HCT116 (cell line): ENCODE measurements at regions of chr3 and their contacts with region 1.

Region 1: GRCh38 chr3:39000008-39000450 is 51.7 kb downstream of the SCN11A start:
- DNase-seq: peak; percentile 80
- ATAC-seq: peak; percentile 94
- H3K4me3 ChIP-seq: no peak overlapping the region
- H3K27ac ChIP-seq: no peak overlapping the region
- H3K4me1 ChIP-seq: no peaks in the 10 kb centered on the region
- H3K27me3 ChIP-seq: 0 out of 2 replicates have a peak, but pooled peaks cover 4% of the 10 kb centered on the region
- CTCF ChIP-seq: peak; percentile 83 to 99 (median 95)
- POLR2A ChIP-seq: no peak
- RAD21 ChIP-seq: peak; percentile 88

Region 2: GRCh38 chr3:38651154-38651789 is 348.8 kb before region 1 on chr3:
- CTCF ChIA-PET with region 1: interaction called, 16 read pairs
- POLR2A ChIA-PET with region 1: no interaction called
- RAD21 ChIA-PET with region 1: no interaction called
- intact Hi-C with region 1: loop called (anchors 5 kb)
- DNase-seq: peak; percentile 60
- ATAC-seq: peak; percentile 62
- H3K4me3 ChIP-seq: no peak overlapping the region
- H3K27ac ChIP-seq: no peak overlapping the region
- H3K4me1 ChIP-seq: peaks cover 11 to 31% of the 10 kb centered on the region in 2 experiments
- H3K27me3 ChIP-seq: no peaks in the 10 kb centered on the region
- CTCF ChIP-seq: peak; percentile 80 to 98 (median 85)
- POLR2A ChIP-seq: no peak
- RAD21 ChIP-seq: peak; percentile 80

Region 3: GRCh38 chr3:38843898-38844297 is 156.1 kb before region 1 on chr3:
- CTCF ChIA-PET with region 1: interaction called, 16 read pairs
- POLR2A ChIA-PET with region 1: no interaction called
- RAD21 ChIA-PET with region 1: interaction called in 1 of 2 experiments, 3 read pairs
- intact Hi-C with region 1: no loop called
- DNase-seq: peak; percentile 60
- ATAC-seq: peak; percentile 97
- H3K4me3 ChIP-seq: no peak overlapping the region
- H3K27ac ChIP-seq: no peak overlapping the region
- H3K4me1 ChIP-seq: no peaks in the 10 kb centered on the region
- H3K27me3 ChIP-seq: peaks cover 21% of the 10 kb centered on the region
- CTCF ChIP-seq: peak; percentile 47 to 74 (median 62)
- POLR2A ChIP-seq: no peak
- RAD21 ChIP-seq: peak; percentile 83

Region 4: GRCh38 chr3:38970851-38971638 is 29.0 kb before region 1 on chr3:
- CTCF ChIA-PET with region 1: interaction called, 13 read pairs
- POLR2A ChIA-PET with region 1: no interaction called
- RAD21 ChIA-PET with region 1: no interaction called
- intact Hi-C with region 1: no loop called
- DNase-seq: no peak
- ATAC-seq: no peak
- H3K4me3 ChIP-seq: no peak overlapping the region
- H3K27ac ChIP-seq: no peak overlapping the region
- H3K4me1 ChIP-seq: no peaks in the 10 kb centered on the region
- H3K27me3 ChIP-seq: peaks cover 29% of the 10 kb centered on the region
- CTCF ChIP-seq: no peak
- POLR2A ChIP-seq: no peak
- RAD21 ChIP-seq: no peak

Region 5: DNA sequence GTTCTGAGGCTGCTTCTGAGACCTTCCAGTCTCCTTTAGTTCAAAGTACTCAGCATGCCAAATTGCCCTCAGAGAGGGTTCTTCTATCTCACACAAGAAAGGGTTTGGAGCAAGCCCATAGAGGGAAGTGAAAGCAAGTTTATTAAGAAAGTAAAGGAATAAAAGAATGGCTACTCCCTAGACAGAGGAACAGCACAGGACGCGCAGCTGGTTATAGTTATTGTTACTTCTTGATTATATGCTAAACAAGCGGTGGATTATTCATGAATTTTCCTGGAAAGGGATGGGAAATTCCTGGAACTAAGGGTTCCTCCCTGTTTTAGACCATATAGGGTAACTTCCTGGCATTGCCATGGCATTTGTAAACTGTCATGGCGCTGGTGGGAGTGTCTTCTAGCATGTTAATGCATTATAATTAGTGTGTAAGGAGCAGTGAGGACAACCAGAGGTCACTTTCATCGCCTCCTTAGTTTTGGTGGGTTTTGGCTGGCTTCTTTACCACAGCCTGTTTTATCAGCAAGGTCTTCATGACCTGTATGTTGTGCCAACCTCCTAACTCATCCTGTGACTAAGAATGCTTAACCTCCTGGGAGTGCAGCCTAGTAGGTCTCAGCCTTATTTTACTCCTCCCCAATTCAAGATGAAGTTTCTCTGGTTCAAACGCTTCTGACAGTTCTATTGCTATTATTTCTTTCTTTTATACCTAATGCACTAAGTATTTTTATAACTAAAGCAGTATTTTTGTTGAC is 25.4 kb after region 1 on chr3:
- CTCF ChIA-PET with region 1: interaction called, 17 read pairs
- POLR2A ChIA-PET with region 1: no interaction called
- RAD21 ChIA-PET with region 1: no interaction called
- intact Hi-C with region 1: no loop called
- DNase-seq: no peak
- ATAC-seq: no peak
- H3K4me3 ChIP-seq: no peak overlapping the region
- H3K27ac ChIP-seq: no peak overlapping the region
- H3K4me1 ChIP-seq: no peaks in the 10 kb centered on the region
- H3K27me3 ChIP-seq: peaks cover 6% of the 10 kb centered on the region
- CTCF ChIP-seq: no peak
- POLR2A ChIP-seq: no peak
- RAD21 ChIP-seq: no peak